SK-N-SH (cell line): ENCODE measurements at regions of chr10 and their contacts with region 1.

Region 1: DNA sequence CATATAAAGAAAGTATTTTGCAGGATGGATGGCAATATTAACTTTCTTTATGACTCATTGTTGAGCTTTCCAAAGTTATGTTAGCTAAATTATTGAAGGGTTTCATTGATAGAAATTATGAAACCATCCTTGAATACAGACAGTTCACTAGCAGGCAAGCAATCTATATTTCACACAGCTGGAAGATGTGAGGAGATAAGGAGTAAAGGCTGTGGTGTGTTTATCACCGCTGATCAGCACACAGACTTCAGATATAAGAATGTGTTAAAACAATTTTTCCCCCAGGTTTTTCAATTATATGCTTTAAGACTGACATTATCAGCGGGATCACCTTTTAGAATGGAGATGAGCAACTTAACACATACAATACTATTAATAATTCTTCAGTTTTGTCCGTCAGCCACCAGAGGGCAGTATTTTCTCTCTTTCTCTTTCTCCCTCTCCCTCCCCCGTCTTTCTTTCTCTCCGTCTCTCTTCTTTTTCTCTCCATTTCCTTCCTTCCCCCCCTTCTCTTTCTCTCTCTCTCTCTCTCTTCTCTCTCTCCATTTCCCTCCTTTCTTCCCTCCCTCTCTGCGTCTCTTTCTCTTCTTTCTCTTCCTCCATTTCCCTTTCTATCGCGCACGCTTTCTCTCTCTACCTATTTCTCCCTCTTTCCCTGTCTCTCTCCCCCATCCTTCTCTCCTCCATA is 62.9 kb upstream of the FAM171A1 start:
- DNase-seq: peak; percentile 58
- H3K4me3 ChIP-seq: peak overlapping the region; percentile 3 to 43
- H3K27ac ChIP-seq: no peak overlapping the region
- H3K4me1 ChIP-seq: peaks cover 0 to 3% of the 10 kb centered on the region in 2 experiments; a peak in 1 of 4 replicates
- H3K27me3 ChIP-seq: no peaks in the 10 kb centered on the region; the same call in 1 of the 2 replicates
- CTCF ChIP-seq: peak; percentile 79
- EP300 ChIP-seq: no peak
- RAD21 ChIP-seq: peak; percentile 75

Region 2: GRCh38 chr10:15725603-15726002 is 291.6 kb after region 1 on chr10:
- CTCF ChIA-PET with region 1: interaction called, 12 read pairs
- POLR2A ChIA-PET with region 1: interaction called, 5 read pairs
- DNase-seq: peak; percentile 60
- H3K4me3 ChIP-seq: no peak overlapping the region
- H3K27ac ChIP-seq: no peak overlapping the region
- H3K4me1 ChIP-seq: no peaks in the 10 kb centered on the region
- H3K27me3 ChIP-seq: peaks cover 5% of the 10 kb centered on the region; the same call in 1 of the 2 replicates
- CTCF ChIP-seq: peak; percentile 64
- EP300 ChIP-seq: no peak
- RAD21 ChIP-seq: peak; percentile 71